Activated CD4-positive, alpha-beta memory T cell treated with anti-CD3 and anti-CD28 coated beads for 36 hours (primary cell): ENCODE measurements at regions of chr6 and their contacts with region 1.

Region 1: GRCh38 chr6:107459283-107460082 is at the start of gene PDSS2:
- DNase-seq: peak; percentile 99
- H3K4me3 Mint-ChIP-seq: peak within 1 kb of the TSS; percentile 90
- H3K27ac Mint-ChIP-seq: peak within 1 kb of the TSS; percentile 82
- H3K4me1 Mint-ChIP-seq: peaks cover 13% of the 10 kb centered on the region
- H3K27me3 Mint-ChIP-seq: no peaks in the 10 kb centered on the region
- total RNA-seq, gene PDSS2: 9.8 to 10.4 TPM

Region 2: DNA sequence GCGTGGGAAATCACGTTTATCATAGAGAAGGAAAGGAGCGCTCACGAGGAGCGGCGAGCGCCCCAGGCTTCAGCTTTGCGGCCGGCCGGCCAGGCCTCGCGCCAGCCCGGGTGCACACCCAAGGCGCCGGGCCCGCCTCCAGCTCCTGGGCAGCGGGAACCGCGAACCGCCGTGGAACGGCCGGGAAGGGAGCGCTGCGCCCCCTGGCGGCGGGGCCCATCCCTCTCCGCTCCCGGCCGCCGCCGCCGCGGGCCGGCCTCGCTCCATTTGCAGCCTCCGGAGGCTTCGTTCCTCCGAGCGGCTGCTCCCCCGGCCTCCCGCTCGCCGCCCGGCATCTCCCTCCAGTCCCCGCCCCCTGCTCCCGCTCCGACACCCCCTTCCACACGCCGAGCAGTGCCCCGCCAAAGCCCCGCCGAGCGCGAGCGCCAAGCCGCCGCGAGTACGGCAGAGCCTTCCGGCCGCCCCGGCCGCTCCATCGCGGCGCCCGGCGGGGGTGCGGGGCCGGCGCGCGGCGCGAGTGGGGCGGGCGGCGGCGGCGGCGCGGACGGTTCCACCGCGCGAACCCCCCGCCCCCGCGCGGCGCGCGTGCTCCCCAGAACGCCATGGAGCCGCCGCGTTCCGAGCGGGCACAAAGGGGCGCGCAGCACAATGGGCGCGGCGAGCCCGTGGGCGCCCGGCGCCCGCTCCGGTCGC is 345.1 kb before region 1 on chr6:
- CTCF ChIA-PET with region 1: interaction called, 4 read pairs
- POLR2A ChIA-PET with region 1: no interaction called
- intact Hi-C with region 1: loop called (anchors 10 kb)
- DNase-seq: peak; percentile 77
- H3K4me3 Mint-ChIP-seq: peak overlapping the region; percentile 72
- H3K27ac Mint-ChIP-seq: peak overlapping the region; percentile 45
- H3K4me1 Mint-ChIP-seq: peaks cover 18% of the 10 kb centered on the region
- H3K27me3 Mint-ChIP-seq: peaks cover 7% of the 10 kb centered on the region

Region 3: GRCh38 chr6:107318100-107318736 is 141.3 kb before region 1 on chr6:
- CTCF ChIA-PET with region 1: interaction called, 11 read pairs
- POLR2A ChIA-PET with region 1: interaction called, 3 read pairs
- intact Hi-C with region 1: loop called (anchors 5 kb)
- DNase-seq: peak; percentile 44
- H3K4me3 Mint-ChIP-seq: no peak overlapping the region
- H3K27ac Mint-ChIP-seq: no peak overlapping the region
- H3K4me1 Mint-ChIP-seq: peaks cover 18% of the 10 kb centered on the region
- H3K27me3 Mint-ChIP-seq: no peaks in the 10 kb centered on the region

Region 4: GRCh38 chr6:107489636-107490565 is 30.4 kb after region 1 on chr6 and contains the start of gene SOBP:
- CTCF ChIA-PET with region 1: interaction called, 7 read pairs
- POLR2A ChIA-PET with region 1: interaction called, 11 read pairs
- intact Hi-C with region 1: loop called (anchors 1 kb)
- DNase-seq: peak; percentile 41
- H3K4me3 Mint-ChIP-seq: peak within 1 kb of the TSS; percentile 82
- H3K27ac Mint-ChIP-seq: no peak within 1 kb of the TSS
- H3K4me1 Mint-ChIP-seq: peaks cover 12% of the 10 kb centered on the region
- H3K27me3 Mint-ChIP-seq: peaks cover 44% of the 10 kb centered on the region
- total RNA-seq, gene SOBP: 0.24 to 0.29 TPM

Region 5: GRCh38 chr6:107614828-107615227 is 155.3 kb after region 1 on chr6:
- CTCF ChIA-PET with region 1: no interaction called
- POLR2A ChIA-PET with region 1: no interaction called
- intact Hi-C with region 1: loop called (anchors 1 kb)
- DNase-seq: no peak
- H3K4me3 Mint-ChIP-seq: no peak overlapping the region
- H3K27ac Mint-ChIP-seq: no peak overlapping the region
- H3K4me1 Mint-ChIP-seq: peaks cover 13% of the 10 kb centered on the region
- H3K27me3 Mint-ChIP-seq: no peaks in the 10 kb centered on the region

Region 6: DNA sequence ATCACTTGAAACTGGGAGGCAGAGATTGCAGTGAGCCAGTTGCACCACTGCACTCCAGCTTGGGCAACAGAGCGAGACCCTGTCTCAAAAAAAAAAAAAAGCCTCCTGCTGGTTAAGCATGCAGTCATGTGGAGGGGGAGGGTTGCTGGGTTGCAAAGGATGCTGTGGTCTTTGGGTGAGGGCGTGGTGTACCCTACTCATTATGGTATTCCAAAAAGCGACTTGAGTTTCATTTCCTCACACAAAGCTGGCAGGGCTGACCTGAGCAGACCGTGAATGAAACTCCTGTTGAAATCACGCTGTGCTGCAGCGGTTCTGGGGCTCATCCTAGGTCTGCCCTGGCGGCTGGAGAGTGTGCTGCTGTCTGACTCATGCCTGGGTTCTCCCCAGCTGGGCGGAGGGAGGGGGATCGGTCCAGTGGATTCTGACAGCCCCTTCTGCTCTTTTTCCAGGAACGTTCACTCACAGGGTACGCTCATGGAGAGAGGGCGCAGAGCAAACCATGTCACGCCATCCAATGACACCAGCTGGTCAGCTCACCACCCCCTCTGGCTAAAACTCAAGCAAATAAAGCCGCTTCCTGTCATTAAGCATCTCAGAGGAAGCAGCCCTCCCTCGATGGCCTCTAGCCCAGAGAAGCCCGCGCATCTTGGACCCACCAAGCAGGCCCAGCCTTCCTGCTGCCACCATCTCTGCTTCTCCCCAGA is 198.4 kb after region 1 on chr6:
- CTCF ChIA-PET with region 1: interaction called, 3 read pairs
- POLR2A ChIA-PET with region 1: interaction called, 4 read pairs
- intact Hi-C with region 1: loop called (anchors 1 kb)
- DNase-seq: peak; percentile 84
- H3K4me3 Mint-ChIP-seq: no peak overlapping the region
- H3K27ac Mint-ChIP-seq: no peak overlapping the region
- H3K4me1 Mint-ChIP-seq: peaks cover 19% of the 10 kb centered on the region
- H3K27me3 Mint-ChIP-seq: peaks cover 1% of the 10 kb centered on the region